ENCODE measurements at regions of chr2 and their contacts with region 1.

Region 1: DNA sequence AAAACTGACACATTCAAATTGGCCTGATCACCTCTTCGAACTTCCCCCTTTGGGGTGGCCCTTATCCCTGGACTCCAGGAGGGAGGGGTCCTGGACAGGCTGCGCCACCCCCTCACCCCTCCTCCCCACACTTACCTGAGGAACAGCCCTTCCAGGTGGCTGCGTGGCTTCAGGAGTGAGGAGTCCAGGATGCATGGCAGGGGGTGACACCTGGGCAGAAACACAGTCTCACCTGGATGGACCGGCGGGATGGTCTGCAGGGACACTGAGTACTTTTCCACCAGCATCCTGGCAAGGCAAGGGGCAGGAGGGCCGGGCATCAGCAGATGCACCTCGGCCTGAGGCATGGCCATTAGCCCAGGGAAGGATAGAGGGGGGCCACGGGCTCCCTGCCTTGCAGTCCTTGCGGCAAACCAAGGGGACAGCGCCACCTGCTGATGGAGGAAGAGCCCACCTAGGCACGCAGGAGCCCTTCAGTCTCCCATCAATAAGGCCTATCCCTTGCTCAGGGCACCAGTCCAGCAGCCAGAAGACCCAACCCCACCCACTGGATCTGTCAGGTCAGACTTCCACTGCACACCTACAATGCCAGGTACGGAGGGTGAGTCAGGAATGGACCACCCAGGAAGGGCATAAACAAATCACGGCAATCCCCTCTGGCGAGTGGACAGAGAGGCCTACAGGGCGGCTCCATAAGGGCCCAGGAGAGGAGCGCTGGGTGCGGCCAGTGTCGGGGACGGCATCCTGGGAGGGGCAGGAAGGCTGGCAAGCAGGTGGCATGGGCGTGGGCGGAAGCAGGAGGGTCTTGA is 26.0 kb downstream of the FAM178B start:
- DNase-seq: peak; percentile 68 to 93 (median 88)
- ATAC-seq: peak; percentile 22
- H3K4me3 ChIP-seq: no peak overlapping the region
- H3K4me3 Mint-ChIP-seq: peak overlapping the region; percentile 32
- H3K27ac ChIP-seq: no peak overlapping the region
- H3K27ac Mint-ChIP-seq: peak overlapping the region; percentile 71
- H3K4me1 ChIP-seq: peaks cover 47% of the 10 kb centered on the region
- H3K4me1 Mint-ChIP-seq: peaks cover 52% of the 10 kb centered on the region
- H3K27me3 ChIP-seq: no peaks in the 10 kb centered on the region
- H3K27me3 Mint-ChIP-seq: no peaks in the 10 kb centered on the region
- CTCF ChIP-seq: peak; percentile 77

Region 2: GRCh38 chr2:95215018-95215612 is 1745.2 kb before region 1 on chr2:
- CTCF ChIA-PET with region 1: no interaction called
- POLR2A ChIA-PET with region 1: no interaction called
- intact Hi-C with region 1: no loop called
- DNase-seq: no peak
- ATAC-seq: no peak
- H3K4me3 ChIP-seq: no peak overlapping the region
- H3K4me3 Mint-ChIP-seq: no peak overlapping the region
- H3K27ac ChIP-seq: no peak overlapping the region
- H3K27ac Mint-ChIP-seq: no peak overlapping the region
- H3K4me1 ChIP-seq: no peaks in the 10 kb centered on the region
- H3K4me1 Mint-ChIP-seq: peaks cover 2% of the 10 kb centered on the region
- H3K27me3 ChIP-seq: no peaks in the 10 kb centered on the region
- H3K27me3 Mint-ChIP-seq: no peaks in the 10 kb centered on the region
- CTCF ChIP-seq: no peak

Region 3: DNA sequence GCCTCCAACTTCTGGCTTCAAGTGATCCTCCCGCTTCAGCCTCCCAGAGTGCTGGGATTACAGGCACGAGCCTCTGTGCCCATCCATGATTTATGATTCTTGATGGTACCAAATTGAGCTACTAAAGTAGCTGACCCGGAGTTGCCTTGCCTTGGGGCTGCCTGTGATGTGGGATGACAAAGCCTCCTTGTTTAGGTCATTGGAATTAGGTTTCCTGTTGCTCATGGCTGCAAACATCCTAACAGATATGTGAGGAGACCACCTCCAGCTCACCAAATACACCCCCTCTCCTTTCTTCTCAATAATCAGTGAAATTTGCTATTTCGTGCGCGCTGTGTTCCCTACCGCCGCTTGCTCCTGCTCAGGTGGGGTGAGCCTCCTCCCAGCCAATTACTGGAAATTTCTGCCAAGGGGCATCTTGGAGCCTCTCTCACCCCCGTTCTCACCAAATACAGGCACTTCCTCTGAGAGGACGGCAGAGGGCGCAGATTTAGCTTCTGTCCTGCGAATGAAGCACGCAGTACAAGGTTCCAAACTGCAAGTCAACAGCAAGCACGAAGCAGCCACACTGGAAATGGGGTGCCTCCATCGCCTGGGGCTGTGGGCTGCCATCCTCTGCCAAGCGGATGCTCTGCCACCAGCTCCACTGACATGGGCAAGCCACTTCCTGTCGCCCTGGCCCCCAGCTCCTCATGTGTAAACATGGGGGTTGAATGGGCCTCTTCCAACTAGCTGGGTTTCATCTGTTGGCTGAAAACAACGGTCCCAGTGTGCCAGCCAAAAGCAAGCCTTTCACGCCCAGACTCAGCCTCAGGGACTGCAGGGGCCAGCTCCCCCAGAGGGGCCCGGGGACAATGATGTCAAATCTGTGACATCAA is 553.1 kb before region 1 on chr2:
- CTCF ChIA-PET with region 1: no interaction called
- POLR2A ChIA-PET with region 1: interaction called, 4 read pairs
- intact Hi-C with region 1: loop called (anchors 1 to 2 kb)
- DNase-seq: peak; percentile 55 to 94 (median 79)
- ATAC-seq: peak; percentile 93
- H3K4me3 ChIP-seq: peak overlapping the region in 1 of 2 experiments; percentile 33
- H3K4me3 Mint-ChIP-seq: peak overlapping the region; percentile 72
- H3K27ac ChIP-seq: peak overlapping the region; percentile 48 to 58
- H3K27ac Mint-ChIP-seq: peak overlapping the region; percentile 97
- H3K4me1 ChIP-seq: peaks cover 36% of the 10 kb centered on the region
- H3K4me1 Mint-ChIP-seq: peaks cover 51% of the 10 kb centered on the region
- H3K27me3 ChIP-seq: no peaks in the 10 kb centered on the region
- H3K27me3 Mint-ChIP-seq: no peaks in the 10 kb centered on the region
- CTCF ChIP-seq: peak; percentile 71

Region 4: GRCh38 chr2:96638144-96639121 is 321.9 kb before region 1 on chr2 and contains the start of gene KANSL3:
- CTCF ChIA-PET with region 1: no interaction called
- POLR2A ChIA-PET with region 1: interaction called, 3 read pairs
- intact Hi-C with region 1: loop called in 1 of 2 experiments (anchors 5 kb)
- DNase-seq: peak; percentile 79 to 95 (median 88)
- ATAC-seq: peak; percentile 85
- H3K4me3 ChIP-seq: peak within 1 kb of the TSS; percentile 71 to 95
- H3K4me3 Mint-ChIP-seq: peak within 1 kb of the TSS; percentile 93
- H3K27ac ChIP-seq: peak within 1 kb of the TSS; percentile 83 to 91
- H3K27ac Mint-ChIP-seq: peak within 1 kb of the TSS; percentile 96
- H3K4me1 ChIP-seq: peaks cover 24% of the 10 kb centered on the region
- H3K4me1 Mint-ChIP-seq: peaks cover 32% of the 10 kb centered on the region
- H3K27me3 ChIP-seq: no peaks in the 10 kb centered on the region
- H3K27me3 Mint-ChIP-seq: peaks cover 2% of the 10 kb centered on the region
- CTCF ChIP-seq: no peak
- total RNA-seq, gene KANSL3: 58.8 to 60.4 TPM

Region 5: DNA sequence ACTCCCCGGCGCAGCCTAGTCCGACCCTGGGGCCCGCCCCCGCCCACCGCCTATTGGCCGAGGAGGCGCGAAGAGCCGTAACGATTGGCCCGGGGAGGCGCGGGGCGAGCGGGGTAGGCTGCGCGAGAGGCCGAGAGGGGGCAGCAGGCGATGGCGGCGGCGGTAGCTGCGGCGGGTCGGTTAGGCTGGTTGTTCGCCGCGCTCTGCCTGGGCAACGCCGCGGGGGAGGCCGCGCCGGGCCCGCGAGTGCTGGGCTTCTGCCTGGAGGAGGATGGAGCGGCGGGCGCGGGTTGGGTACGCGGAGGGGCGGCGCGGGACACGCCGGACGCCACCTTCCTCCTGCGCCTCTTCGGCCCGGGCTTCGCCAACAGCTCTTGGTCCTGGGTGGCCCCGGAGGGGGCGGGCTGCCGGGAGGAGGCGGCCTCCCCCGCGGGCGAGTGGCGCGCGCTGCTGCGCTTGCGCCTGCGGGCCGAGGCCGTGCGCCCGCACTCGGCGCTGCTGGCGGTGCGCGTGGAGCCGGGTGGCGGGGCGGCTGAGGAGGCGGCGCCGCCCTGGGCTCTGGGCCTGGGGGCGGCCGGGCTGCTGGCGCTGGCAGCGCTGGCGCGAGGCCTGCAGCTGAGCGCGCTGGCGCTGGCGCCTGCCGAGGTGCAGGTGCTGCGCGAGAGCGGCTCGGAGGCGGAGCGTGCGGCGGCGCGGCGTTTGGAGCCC is 144.1 kb before region 1 on chr2 and contains the start of gene CNNM3:
- CTCF ChIA-PET with region 1: interaction called, 5 read pairs
- POLR2A ChIA-PET with region 1: interaction called, 19 read pairs
- intact Hi-C with region 1: loop called in 1 of 2 experiments (anchors 1 kb)
- DNase-seq: peak; percentile 90 to 98 (median 96)
- ATAC-seq: peak; percentile 92
- H3K4me3 ChIP-seq: peak within 1 kb of the TSS; percentile 70 to 83
- H3K4me3 Mint-ChIP-seq: peak within 1 kb of the TSS; percentile 87
- H3K27ac ChIP-seq: peak within 1 kb of the TSS; percentile 57 to 70
- H3K27ac Mint-ChIP-seq: peak within 1 kb of the TSS; percentile 90
- H3K4me1 ChIP-seq: peaks cover 48% of the 10 kb centered on the region
- H3K4me1 Mint-ChIP-seq: peaks cover 63% of the 10 kb centered on the region
- H3K27me3 ChIP-seq: no peaks in the 10 kb centered on the region
- H3K27me3 Mint-ChIP-seq: no peaks in the 10 kb centered on the region
- CTCF ChIP-seq: peak; percentile 63
- total RNA-seq, gene CNNM3: 40.1 to 41.8 TPM

Region 6: GRCh38 chr2:96868555-96869280 is 91.6 kb before region 1 on chr2:
- CTCF ChIA-PET with region 1: interaction called, 651 read pairs
- POLR2A ChIA-PET with region 1: interaction called, 11 read pairs
- intact Hi-C with region 1: loop called in 1 of 2 experiments (anchors 2 kb)
- DNase-seq: peak in 8 of 9 experiments; percentile 43 to 80 (median 66)
- ATAC-seq: peak; percentile 39
- H3K4me3 ChIP-seq: peak overlapping the region; percentile 77 to 83
- H3K4me3 Mint-ChIP-seq: peak overlapping the region; percentile 86
- H3K27ac ChIP-seq: peak overlapping the region; percentile 53 to 60
- H3K27ac Mint-ChIP-seq: peak overlapping the region; percentile 84
- H3K4me1 ChIP-seq: peaks cover 38% of the 10 kb centered on the region
- H3K4me1 Mint-ChIP-seq: peaks cover 45% of the 10 kb centered on the region
- H3K27me3 ChIP-seq: no peaks in the 10 kb centered on the region
- H3K27me3 Mint-ChIP-seq: no peaks in the 10 kb centered on the region
- CTCF ChIP-seq: peak; percentile 50

Region 7: DNA sequence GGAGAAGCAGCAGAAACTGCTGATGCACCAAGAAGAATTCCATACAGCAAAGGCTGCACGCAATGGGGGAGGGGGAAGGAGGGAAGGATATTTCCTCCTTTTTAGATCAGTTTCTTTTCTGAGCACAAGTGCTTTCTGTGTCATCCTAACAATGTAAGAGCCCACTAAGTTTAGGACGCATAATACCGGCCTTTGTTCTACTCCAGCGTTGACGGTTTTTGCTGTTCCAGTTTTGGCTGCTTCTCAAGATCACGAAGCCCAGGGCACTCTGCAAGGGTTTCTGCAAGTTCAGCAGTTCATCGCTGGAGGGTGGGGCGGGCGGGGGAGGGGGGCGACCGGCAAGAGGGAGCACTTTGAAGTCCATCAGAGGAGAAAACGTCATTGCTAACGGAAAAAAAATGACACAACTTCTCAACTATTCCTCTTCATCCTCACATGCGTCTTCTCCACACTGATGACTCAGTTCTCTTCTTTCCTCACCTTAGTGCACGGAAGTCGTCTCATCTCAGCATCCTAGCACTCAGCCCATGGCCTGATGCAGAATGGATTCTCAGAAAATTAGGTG is 17.4 kb after region 1 on chr2:
- CTCF ChIA-PET with region 1: interaction called, 3 read pairs
- POLR2A ChIA-PET with region 1: interaction called, 5 read pairs
- intact Hi-C with region 1: loop called in 1 of 2 experiments (anchors 2 kb)
- DNase-seq: peak in 4 of 9 experiments; percentile 28 to 61 (median 36)
- ATAC-seq: peak; percentile 88
- H3K4me3 ChIP-seq: no peak overlapping the region
- H3K4me3 Mint-ChIP-seq: no peak overlapping the region
- H3K27ac ChIP-seq: no peak overlapping the region
- H3K27ac Mint-ChIP-seq: no peak overlapping the region
- H3K4me1 ChIP-seq: no peaks in the 10 kb centered on the region
- H3K4me1 Mint-ChIP-seq: peaks cover 8% of the 10 kb centered on the region
- H3K27me3 ChIP-seq: no peaks in the 10 kb centered on the region
- H3K27me3 Mint-ChIP-seq: no peaks in the 10 kb centered on the region
- CTCF ChIP-seq: no peak

Region 8: GRCh38 chr2:97950329-97951154 is 990.2 kb after region 1 on chr2:
- CTCF ChIA-PET with region 1: no interaction called
- POLR2A ChIA-PET with region 1: no interaction called
- intact Hi-C with region 1: no loop called
- DNase-seq: no peak
- ATAC-seq: no peak
- H3K4me3 ChIP-seq: no peak overlapping the region
- H3K4me3 Mint-ChIP-seq: no peak overlapping the region
- H3K27ac ChIP-seq: no peak overlapping the region
- H3K27ac Mint-ChIP-seq: no peak overlapping the region
- H3K4me1 ChIP-seq: peaks cover 11% of the 10 kb centered on the region
- H3K4me1 Mint-ChIP-seq: peaks cover 72% of the 10 kb centered on the region
- H3K27me3 ChIP-seq: no peaks in the 10 kb centered on the region
- H3K27me3 Mint-ChIP-seq: no peaks in the 10 kb centered on the region
- CTCF ChIP-seq: no peak